Lower leg skin (tissue), 4 donors: ENCODE measurements at regions of chr15 and their contacts with region 1.

Region 1: GRCh38 chr15:90082140-90082715 is 20.0 kb downstream of the IDH2 start:
- DNase-seq: no peak
- H3K4me3 ChIP-seq: no peak overlapping the region
- CTCF ChIP-seq: no peak
- POLR2A ChIP-seq: no peak

Region 2: GRCh38 chr15:89167267-89168176 is 914.7 kb before region 1 on chr15:
- intact Hi-C with region 1: no loop called
- DNase-seq: no peak
- H3K4me3 ChIP-seq: no peak overlapping the region
- CTCF ChIP-seq: no peak
- POLR2A ChIP-seq: no peak

Region 3: GRCh38 chr15:89898614-89899294 is 183.5 kb before region 1 on chr15:
- intact Hi-C with region 1: loop called (anchors 5 kb)
- DNase-seq: no peak
- H3K4me3 ChIP-seq: no peak overlapping the region
- CTCF ChIP-seq: peak in 1 of 3 donors; percentile 29
- POLR2A ChIP-seq: no peak